IMR-90 (cell line): ENCODE measurements at regions of chr3 and their contacts with region 1.

Region 1: DNA sequence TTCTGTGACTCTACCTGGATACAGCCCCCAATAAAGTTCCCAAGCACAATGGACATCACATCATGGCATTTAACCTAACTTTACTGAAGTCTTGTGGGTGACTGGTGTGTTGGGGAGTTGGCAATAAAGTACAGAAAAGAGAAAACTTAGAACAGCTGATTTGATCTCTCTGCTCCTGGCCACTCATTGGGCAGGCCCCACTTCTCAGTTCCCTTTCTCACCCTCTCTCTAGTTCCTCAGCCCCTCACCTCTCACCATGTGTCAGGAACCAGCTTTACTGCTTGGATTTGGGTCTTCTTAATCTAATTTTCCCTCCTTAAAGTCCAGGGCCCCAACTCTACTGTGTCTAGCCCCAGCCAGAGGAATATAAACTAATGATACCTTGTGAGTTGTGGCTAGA is 713 bp upstream of the MUC13 start:
- DNase-seq: no peak
- ATAC-seq: no peak
- H3K4me3 ChIP-seq: no peak overlapping the region
- H3K27ac ChIP-seq: no peak overlapping the region
- H3K4me1 ChIP-seq: no peaks in the 10 kb centered on the region
- H3K27me3 ChIP-seq: peaks cover 18% of the 10 kb centered on the region
- CTCF ChIP-seq: no peak
- POLR2A ChIP-seq: no peak
- RAD21 ChIP-seq: no peak

Region 2: DNA sequence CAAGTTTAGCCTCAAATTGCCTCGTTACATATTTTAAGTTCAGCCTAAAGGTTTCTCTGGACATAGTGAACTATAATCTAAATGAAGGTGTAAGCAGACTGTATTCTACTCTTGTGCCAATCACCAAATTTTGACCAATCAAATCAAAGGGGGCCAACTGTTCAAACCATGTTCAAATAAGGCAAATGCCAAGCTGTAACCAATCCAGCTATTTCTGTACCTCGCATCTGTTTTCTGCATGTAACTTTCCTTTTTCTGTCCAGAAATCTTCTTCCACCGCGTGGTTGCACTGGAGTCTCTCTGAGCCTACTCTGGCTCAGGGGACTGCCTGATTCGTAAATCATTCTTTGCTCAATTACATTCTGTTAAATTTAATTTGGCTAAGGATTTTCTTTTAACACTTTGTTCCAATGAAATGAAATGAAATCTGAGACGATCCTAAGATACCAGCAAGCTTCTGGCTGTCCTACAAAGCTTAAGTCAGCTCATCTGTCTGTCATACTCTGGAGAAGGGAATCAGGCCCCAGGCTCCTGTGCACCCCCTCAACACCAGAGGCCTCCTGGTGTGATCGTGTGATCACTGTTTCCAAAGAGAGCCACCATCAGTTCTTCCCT is 493.1 kb after region 1 on chr3:
- CTCF ChIA-PET with region 1: no interaction called
- POLR2A ChIA-PET with region 1: no interaction called
- dilution Hi-C with region 1: no loop called
- in situ Hi-C with region 1: loop called (anchors 5 kb)
- intact Hi-C with region 1: no loop called
- DNase-seq: no peak
- ATAC-seq: no peak
- H3K4me3 ChIP-seq: no peak overlapping the region
- H3K27ac ChIP-seq: no peak overlapping the region
- H3K4me1 ChIP-seq: peaks cover 7% of the 10 kb centered on the region
- H3K27me3 ChIP-seq: no peaks in the 10 kb centered on the region
- CTCF ChIP-seq: no peak
- POLR2A ChIP-seq: no peak
- RAD21 ChIP-seq: no peak

Region 3: DNA sequence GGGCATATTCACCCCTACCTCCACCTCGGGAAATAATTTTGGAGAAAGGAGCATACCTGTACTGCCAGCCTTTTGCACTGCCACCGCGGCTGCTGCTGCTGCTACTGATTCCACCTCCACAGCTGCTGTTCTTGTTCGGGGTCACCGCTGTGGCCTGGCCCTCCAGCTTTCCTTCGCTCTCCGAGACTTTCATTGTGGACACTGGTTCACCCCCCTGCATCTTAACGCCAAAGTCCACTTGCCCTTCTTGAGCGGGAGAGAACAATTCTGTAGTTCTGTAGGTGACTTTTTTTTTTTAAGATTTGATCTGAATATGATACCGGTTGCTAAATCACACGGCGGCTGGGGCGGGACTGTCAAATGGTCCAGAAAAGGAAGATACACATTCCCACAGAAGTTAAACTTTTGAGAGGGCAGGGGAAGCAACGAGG is 659.3 kb after region 1 on chr3:
- CTCF ChIA-PET with region 1: no interaction called
- POLR2A ChIA-PET with region 1: interaction called, 12 read pairs
- dilution Hi-C with region 1: no loop called
- in situ Hi-C with region 1: no loop called
- intact Hi-C with region 1: no loop called
- DNase-seq: peak; percentile 22
- ATAC-seq: no peak; the same call in 1 of the 2 replicates
- H3K4me3 ChIP-seq: peak overlapping the region; percentile 84
- H3K27ac ChIP-seq: peak overlapping the region; percentile 75
- H3K4me1 ChIP-seq: no peaks in the 10 kb centered on the region; the same call in none of the 2 replicates
- H3K27me3 ChIP-seq: no peaks in the 10 kb centered on the region
- CTCF ChIP-seq: no peak
- POLR2A ChIP-seq: no peak
- RAD21 ChIP-seq: no peak

Region 4: GRCh38 chr3:126014252-126014651 is 1079.0 kb after region 1 on chr3:
- CTCF ChIA-PET with region 1: no interaction called
- POLR2A ChIA-PET with region 1: no interaction called
- dilution Hi-C with region 1: no loop called
- in situ Hi-C with region 1: no loop called
- intact Hi-C with region 1: no loop called
- DNase-seq: peak; percentile 54
- ATAC-seq: peak; percentile 78
- H3K4me3 ChIP-seq: no peak overlapping the region
- H3K27ac ChIP-seq: no peak overlapping the region
- H3K4me1 ChIP-seq: peaks cover 6% of the 10 kb centered on the region; the same call in 1 of the 2 replicates
- H3K27me3 ChIP-seq: no peaks in the 10 kb centered on the region
- CTCF ChIP-seq: no peak
- POLR2A ChIP-seq: no peak
- RAD21 ChIP-seq: no peak